ENCODE measurements at regions of chr9 and their contacts with region 1.

Region 1: DNA sequence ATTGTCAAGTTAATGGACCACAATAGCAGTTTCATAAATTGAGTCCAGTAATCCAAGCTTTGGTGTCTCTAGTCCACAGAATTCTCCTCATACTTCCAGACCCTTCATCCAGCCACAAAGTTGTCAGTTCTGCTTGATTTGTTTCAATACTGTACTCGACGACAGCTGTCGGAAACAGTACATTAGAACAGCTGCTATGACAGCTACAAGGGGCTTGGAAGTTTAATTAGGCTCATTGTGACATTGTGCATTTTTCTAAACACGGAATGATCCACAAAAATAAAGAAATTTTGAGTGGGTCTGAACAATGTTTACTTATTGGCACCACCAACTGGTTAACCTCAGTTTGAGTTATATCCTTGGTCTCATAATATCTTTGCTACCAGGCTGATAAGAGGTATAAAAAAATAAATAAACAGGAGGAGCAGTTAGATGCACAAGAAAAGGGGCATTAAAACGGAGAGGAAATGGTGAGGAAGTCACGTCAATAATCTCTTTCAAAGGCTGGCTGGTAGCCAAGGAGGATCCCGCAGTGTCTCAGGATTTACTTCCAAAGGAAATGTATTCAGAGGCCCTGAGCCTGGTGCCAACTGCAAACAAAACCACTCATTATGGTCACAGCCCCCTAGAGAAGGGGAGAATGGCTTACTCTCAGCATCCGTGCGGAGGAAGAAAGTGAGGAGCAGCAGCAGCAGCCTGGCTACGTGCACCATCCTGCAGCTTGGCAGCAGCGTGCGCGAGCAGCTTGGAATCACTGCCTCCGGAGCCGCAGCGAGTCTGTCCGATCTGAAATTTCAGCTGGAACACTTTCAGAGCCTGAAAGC is 933.8 kb upstream of the DMAC1 start:
- DNase-seq: peak in 1 of 2 donors; percentile 34
- ATAC-seq: peak in 5 of 8 donors; percentile 53 to 73 (median 59)
- H3K4me3 ChIP-seq: peak overlapping the region in 8 of 10 donors; percentile 9 to 47 (median 26)
- H3K27ac ChIP-seq: peak overlapping the region in 1 of 10 donors; percentile 40
- H3K4me1 ChIP-seq: peaks cover 0 to 13% (median 0%) of the 10 kb centered on the region in 9 donors
- H3K27me3 ChIP-seq: no peaks in the 10 kb centered on the region
- CTCF ChIP-seq: no peak

Region 2: DNA sequence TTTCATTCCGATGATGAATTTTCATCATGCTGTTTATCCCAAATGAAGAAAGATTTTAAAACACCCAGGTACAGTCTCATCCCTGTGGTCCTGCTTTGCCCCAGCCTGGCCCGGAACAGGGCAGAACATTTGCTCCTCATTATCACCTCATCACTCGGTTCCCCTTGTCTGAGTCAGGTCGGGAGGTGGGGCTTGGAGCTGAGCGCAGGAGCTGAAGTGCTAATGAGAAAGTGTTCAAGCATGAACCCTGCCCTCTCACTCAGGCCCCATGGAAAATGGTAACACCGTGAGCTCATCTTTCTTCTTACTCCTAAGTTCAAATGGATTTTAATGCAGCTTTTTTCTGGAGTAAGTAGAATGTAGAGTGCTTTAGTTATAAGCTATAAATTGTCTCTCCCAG is 1509.4 kb before region 1 on chr9:
- intact Hi-C with region 1: no loop called
- DNase-seq: no peak
- ATAC-seq: no peak
- H3K4me3 ChIP-seq: no peak overlapping the region
- H3K27ac ChIP-seq: no peak overlapping the region
- H3K4me1 ChIP-seq: no peaks in the 10 kb centered on the region
- H3K27me3 ChIP-seq: peaks cover 0 to 13% (median 0%) of the 10 kb centered on the region in 7 donors
- CTCF ChIP-seq: no peak

Region 3: DNA sequence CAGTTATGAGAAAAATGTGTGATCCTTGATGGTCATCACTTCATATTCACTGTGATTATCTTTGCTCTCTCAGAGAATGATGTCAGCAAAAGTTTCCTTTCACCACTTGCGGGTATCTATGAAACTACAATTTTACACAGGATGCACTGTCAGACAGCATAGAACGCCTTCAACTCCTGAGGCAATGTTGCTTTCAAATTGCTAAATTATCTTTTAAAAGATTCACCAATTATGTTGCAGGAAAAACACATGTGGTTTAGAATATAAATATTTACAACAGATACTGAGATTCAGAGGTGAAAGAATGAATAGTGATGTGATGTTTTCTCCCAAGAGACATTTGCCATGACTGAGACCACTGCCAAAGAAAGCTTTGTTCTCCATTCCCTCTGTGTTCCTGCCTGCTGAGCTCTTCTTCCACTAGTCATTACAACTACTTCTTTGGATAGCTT is 53.9 kb before region 1 on chr9:
- intact Hi-C with region 1: loop called in 1 of 10 experiments (anchors 10 kb)
- DNase-seq: no peak
- ATAC-seq: no peak
- H3K4me3 ChIP-seq: no peak overlapping the region
- H3K27ac ChIP-seq: no peak overlapping the region
- H3K4me1 ChIP-seq: peaks cover 0 to 31% (median 12%) of the 10 kb centered on the region in 9 donors
- H3K27me3 ChIP-seq: no peaks in the 10 kb centered on the region
- CTCF ChIP-seq: no peak

Region 4: GRCh38 chr9:8784838-8785237 is 51.5 kb after region 1 on chr9:
- intact Hi-C with region 1: loop called in 1 of 10 experiments (anchors 5 kb)
- DNase-seq: no peak
- ATAC-seq: no peak
- H3K4me3 ChIP-seq: peak overlapping the region in 1 of 10 donors; percentile 21
- H3K27ac ChIP-seq: peak overlapping the region in 3 of 10 donors; percentile 13 to 32 (median 15)
- H3K4me1 ChIP-seq: peaks cover 0 to 5% (median 0%) of the 10 kb centered on the region in 9 donors
- H3K27me3 ChIP-seq: no peaks in the 10 kb centered on the region
- CTCF ChIP-seq: no peak